Esophagus muscularis mucosa (tissue), 4 donors: ENCODE measurements at regions of chr16 and their contacts with region 1.

Region 1: GRCh38 chr16:13552062-13552959 is 367.6 kb upstream of the ERCC4 start:
- DNase-seq: peak; percentile 75
- H3K4me3 ChIP-seq: no peak overlapping the region
- H3K27ac ChIP-seq: no peak overlapping the region
- H3K4me1 ChIP-seq: no peaks in the 10 kb centered on the region
- H3K27me3 ChIP-seq: peaks cover 0 to 2% (median 0%) of the 10 kb centered on the region in 4 donors
- CTCF ChIP-seq: no peak
- EP300 ChIP-seq: no peak
- POLR2A ChIP-seq: no peak

Region 2: GRCh38 chr16:13613165-13613564 is 60.9 kb after region 1 on chr16:
- intact Hi-C with region 1: loop called (anchors 10 kb)
- DNase-seq: no peak
- H3K4me3 ChIP-seq: no peak overlapping the region
- H3K27ac ChIP-seq: no peak overlapping the region
- H3K4me1 ChIP-seq: no peaks in the 10 kb centered on the region
- H3K27me3 ChIP-seq: no peaks in the 10 kb centered on the region
- CTCF ChIP-seq: no peak
- EP300 ChIP-seq: no peak
- POLR2A ChIP-seq: no peak